ENCODE measurements at regions of chr5 and their contacts with region 1.

Region 1: GRCh38 chr5:152369298-152369697 is 35.8 kb downstream of the NMUR2 start:
- DNase-seq: no peak
- H3K4me3 ChIP-seq: no peak overlapping the region
- H3K27ac ChIP-seq: no peak overlapping the region
- H3K4me1 ChIP-seq: no peaks in the 10 kb centered on the region
- H3K27me3 ChIP-seq: no peaks in the 10 kb centered on the region
- CTCF ChIP-seq: no peak
- EP300 ChIP-seq: no peak
- RAD21 ChIP-seq: no peak

Region 2: DNA sequence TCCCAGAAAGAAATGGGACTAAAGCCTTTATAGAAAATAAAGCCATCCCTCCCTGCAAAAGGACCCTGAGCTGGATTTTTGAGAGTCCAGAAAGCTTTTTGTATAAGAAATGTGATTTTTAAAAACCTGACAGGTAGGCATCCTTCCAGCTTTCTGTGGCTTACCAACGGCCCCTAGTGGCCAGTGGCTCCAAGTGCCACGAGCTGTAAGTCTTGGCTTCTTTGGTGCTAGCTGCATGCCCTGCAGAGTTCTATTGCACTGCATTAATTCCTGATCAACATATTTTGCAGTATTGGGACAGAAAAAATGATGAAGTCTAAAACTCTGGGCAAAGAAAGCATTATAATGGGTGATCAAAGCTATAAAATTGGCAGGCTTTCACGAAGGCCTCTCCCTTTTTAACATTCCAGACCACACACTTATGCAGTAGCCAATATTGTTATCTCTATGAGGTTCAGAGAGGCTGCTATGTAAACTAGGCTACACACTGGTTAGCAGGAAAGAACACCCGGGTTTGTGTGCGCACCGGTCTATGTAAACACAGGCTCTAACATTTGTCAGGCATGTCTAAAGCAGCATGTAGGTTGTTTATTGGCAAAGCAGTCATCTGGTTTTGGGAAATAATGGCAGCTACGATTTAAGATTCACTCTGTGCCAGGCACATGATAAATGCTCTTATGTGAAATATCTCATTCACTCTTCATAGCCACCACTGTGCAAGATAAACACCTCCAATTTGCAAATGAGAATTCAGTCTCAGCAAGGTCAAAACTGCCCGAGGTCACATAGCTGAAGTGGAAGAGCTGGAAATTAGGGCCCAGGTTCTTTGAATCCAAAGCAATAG is 19.4 kb before region 1 on chr5:
- CTCF ChIA-PET with region 1: interaction called, 12 read pairs
- POLR2A ChIA-PET with region 1: no interaction called
- DNase-seq: peak; percentile 45
- H3K4me3 ChIP-seq: peak overlapping the region in 1 of 2 experiments; percentile 36; a peak in 1 of 4 replicates
- H3K27ac ChIP-seq: no peak overlapping the region
- H3K4me1 ChIP-seq: no peaks in the 10 kb centered on the region
- H3K27me3 ChIP-seq: no peaks in the 10 kb centered on the region
- CTCF ChIP-seq: peak; percentile 83
- EP300 ChIP-seq: no peak
- RAD21 ChIP-seq: peak; percentile 65

Measured in SK-N-SH (cell line).